Esophagus squamous epithelium (tissue), 5 donors: ENCODE measurements at regions of chr6 and their contacts with region 1.

Region 1: DNA sequence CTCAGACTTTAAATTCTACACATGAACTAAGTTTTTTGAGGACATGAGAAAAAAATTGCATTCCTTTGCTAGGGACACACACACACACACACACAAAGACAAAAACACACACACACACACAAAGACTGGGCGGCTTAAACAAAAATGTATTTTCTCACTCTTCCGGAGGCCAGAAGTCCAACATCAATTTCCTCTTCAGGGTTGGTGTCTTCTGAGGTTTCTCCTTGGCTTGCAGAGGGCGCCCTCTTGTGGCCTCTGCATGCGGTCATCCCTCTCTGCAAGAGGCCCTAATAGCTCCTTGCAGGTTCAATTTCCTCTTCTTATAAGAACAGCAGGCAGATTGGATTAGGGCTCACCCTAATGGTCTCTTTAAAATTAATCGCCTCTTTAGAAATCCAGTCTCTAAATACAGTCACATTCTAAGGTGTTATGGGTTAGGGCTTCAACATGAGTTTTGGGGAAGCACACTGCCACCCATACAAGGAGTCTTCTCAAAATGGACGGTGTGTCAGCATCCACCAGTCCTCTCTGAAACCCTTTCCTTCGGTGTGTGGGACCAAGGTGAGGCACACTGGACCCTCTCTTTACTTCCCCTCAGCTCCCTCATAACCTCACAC is 61.4 kb downstream of the GPR6 start:
- DNase-seq: peak; percentile 12
- H3K4me3 ChIP-seq: peak overlapping the region; percentile 7 to 53 (median 19)
- H3K27ac ChIP-seq: peak overlapping the region in 3 of 4 donors; percentile 33 to 59 (median 47)
- H3K4me1 ChIP-seq: peaks cover 4 to 48% (median 14%) of the 10 kb centered on the region in 3 donors
- H3K27me3 ChIP-seq: no peaks in the 10 kb centered on the region
- CTCF ChIP-seq: peak; percentile 81 to 94 (median 92)
- POLR2A ChIP-seq: no peak

Region 2: DNA sequence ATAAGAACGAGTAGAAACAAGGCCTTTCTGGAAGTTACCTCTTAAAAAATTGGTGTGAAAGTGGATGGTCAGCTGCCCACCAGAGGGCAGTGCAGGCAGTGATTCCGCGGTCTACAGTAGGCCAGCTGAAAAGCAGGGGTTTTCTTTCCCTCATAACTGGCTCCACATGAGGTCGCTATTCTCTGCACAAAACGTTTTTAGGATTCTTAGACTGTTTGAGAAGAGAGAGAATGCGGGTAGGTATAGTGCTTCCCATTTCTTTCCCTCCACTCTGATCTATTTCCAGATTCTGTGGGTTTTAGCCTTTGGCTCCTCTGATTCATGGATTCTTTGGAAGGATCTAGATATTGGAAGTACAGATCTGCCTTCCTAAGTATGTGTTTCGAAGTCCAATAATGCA is 334.2 kb before region 1 on chr6:
- intact Hi-C with region 1: loop called (anchors 5 kb)
- DNase-seq: no peak
- H3K4me3 ChIP-seq: no peak overlapping the region
- H3K27ac ChIP-seq: no peak overlapping the region
- H3K4me1 ChIP-seq: peaks cover 0 to 29% (median 0%) of the 10 kb centered on the region in 3 donors
- H3K27me3 ChIP-seq: no peaks in the 10 kb centered on the region
- CTCF ChIP-seq: peak; percentile 87 to 99 (median 98)
- POLR2A ChIP-seq: no peak

Region 3: GRCh38 chr6:109718991-109719390 is 320.5 kb before region 1 on chr6:
- intact Hi-C with region 1: no loop called
- DNase-seq: no peak
- H3K4me3 ChIP-seq: no peak overlapping the region
- H3K27ac ChIP-seq: no peak overlapping the region
- H3K4me1 ChIP-seq: no peaks in the 10 kb centered on the region
- H3K27me3 ChIP-seq: no peaks in the 10 kb centered on the region
- CTCF ChIP-seq: no peak
- POLR2A ChIP-seq: no peak

Region 4: GRCh38 chr6:109795994-109796555 is 243.4 kb before region 1 on chr6:
- intact Hi-C with region 1: loop called (anchors 5 kb)
- DNase-seq: no peak
- H3K4me3 ChIP-seq: no peak overlapping the region
- H3K27ac ChIP-seq: no peak overlapping the region
- H3K4me1 ChIP-seq: peaks cover 8 to 45% (median 14%) of the 10 kb centered on the region in 3 donors
- H3K27me3 ChIP-seq: no peaks in the 10 kb centered on the region
- CTCF ChIP-seq: no peak
- POLR2A ChIP-seq: no peak

Region 5: DNA sequence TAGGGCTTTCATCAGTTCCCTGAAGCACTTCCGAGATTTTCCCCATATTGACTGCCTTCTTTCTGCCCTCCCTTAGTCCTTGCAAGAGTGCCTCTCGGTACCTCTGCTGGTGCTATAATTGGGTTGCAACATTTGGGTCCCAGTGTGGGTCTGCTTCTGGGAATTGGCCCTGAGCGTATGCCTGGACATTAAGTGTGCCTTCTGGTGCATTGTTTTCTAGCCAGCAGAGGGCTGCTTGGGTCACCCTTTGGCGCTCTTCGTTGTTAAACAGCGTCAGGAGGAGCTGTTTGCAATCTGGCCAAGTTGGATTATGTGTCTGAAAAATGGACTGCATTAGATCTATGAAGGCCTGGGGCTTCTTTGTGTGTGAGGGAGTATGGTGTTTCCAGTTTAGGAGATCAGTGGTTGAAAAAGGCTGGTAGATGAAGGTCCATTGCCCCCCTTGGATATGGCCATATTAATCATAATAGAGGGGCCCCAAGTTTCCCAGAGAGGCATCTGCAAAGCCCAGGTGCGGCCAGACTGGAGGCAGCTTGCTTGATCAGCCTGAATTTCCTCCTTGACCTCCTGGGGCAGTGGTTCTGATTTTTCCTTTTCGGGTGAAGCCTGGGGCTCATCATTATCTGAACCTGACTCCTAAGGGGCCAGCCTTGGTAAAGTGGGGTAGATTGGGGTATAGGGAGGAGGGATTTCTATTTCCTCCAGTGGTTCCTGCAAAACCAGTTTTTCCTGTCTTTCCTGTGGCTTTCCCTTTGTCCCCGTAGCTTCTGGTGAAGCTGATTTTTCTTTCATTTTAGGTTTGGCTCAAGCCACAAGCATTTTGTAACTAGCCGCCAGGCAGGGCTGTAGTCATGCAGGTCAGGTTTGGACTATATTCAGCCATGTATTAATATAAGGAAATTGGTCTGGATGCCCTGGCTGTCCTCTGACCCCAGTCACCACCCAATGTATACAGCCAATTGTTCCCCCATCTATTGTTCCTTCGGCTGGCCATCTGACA is 146.7 kb before region 1 on chr6:
- intact Hi-C with region 1: loop called (anchors 10 kb)
- DNase-seq: no peak
- H3K4me3 ChIP-seq: no peak overlapping the region
- H3K27ac ChIP-seq: peak overlapping the region; percentile 64 to 81 (median 76)
- H3K4me1 ChIP-seq: peaks cover 17 to 66% (median 23%) of the 10 kb centered on the region in 3 donors
- H3K27me3 ChIP-seq: no peaks in the 10 kb centered on the region
- CTCF ChIP-seq: peak in 4 of 6 experiments; percentile 13 to 42 (median 29)
- POLR2A ChIP-seq: no peak